Activated T-helper 1 cell treated with anti-CD3 and anti-CD28 coated beads, Interleukin-12 subunit alpha, Interleukin-12 subunit beta, Interleukin-2, Interleukin-4 antibody, amounts not matched to agents 30 ng/mL and 10 ng/mL and 1 ng/mL, durations not matched to agents 14 hours and 24 hours and 36 hours (primary cell): ENCODE measurements at regions of chr11 and their contacts with region 1.

Region 1: GRCh38 chr11:43895601-43896000 is 15.0 kb downstream of the ALKBH3 start:
- DNase-seq: no peak
- H3K4me3 Mint-ChIP-seq: no peak overlapping the region
- H3K27ac Mint-ChIP-seq: no peak overlapping the region
- H3K4me1 Mint-ChIP-seq: no peaks in the 10 kb centered on the region
- H3K27me3 Mint-ChIP-seq: no peaks in the 10 kb centered on the region

Region 2: DNA sequence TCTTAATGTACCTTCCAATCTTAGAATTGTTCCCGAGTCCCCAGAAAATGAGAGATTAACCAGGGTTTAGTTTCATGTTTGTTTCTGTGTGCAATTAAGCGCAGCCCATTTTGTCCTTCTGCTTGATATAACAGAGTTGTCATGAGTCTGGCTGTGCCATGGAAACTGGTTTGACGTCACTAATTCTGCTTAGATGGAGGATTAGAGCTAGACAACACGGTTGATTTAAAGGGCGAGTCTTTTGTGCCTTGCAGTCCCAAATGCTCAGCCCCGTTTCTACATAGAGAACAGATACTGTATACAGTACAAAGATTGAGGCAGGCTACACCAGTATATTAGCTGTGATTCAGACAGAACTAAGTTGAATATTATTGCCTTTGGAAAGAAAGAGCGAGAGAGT is 60.5 kb before region 1 on chr11:
- intact Hi-C with region 1: no loop called
- DNase-seq: no peak
- H3K4me3 Mint-ChIP-seq: no peak overlapping the region
- H3K27ac Mint-ChIP-seq: no peak overlapping the region
- H3K4me1 Mint-ChIP-seq: peaks cover 16% of the 10 kb centered on the region
- H3K27me3 Mint-ChIP-seq: no peaks in the 10 kb centered on the region

Region 3: GRCh38 chr11:44036811-44037657 is 141.4 kb after region 1 on chr11:
- intact Hi-C with region 1: loop called (anchors 1 kb)
- DNase-seq: peak; percentile 11
- H3K4me3 Mint-ChIP-seq: no peak overlapping the region
- H3K27ac Mint-ChIP-seq: no peak overlapping the region
- H3K4me1 Mint-ChIP-seq: no peaks in the 10 kb centered on the region
- H3K27me3 Mint-ChIP-seq: peaks cover 7% of the 10 kb centered on the region